CD4-positive, alpha-beta T cell (primary cell): ENCODE measurements at regions of chr9 and their contacts with region 1.

Region 1: DNA sequence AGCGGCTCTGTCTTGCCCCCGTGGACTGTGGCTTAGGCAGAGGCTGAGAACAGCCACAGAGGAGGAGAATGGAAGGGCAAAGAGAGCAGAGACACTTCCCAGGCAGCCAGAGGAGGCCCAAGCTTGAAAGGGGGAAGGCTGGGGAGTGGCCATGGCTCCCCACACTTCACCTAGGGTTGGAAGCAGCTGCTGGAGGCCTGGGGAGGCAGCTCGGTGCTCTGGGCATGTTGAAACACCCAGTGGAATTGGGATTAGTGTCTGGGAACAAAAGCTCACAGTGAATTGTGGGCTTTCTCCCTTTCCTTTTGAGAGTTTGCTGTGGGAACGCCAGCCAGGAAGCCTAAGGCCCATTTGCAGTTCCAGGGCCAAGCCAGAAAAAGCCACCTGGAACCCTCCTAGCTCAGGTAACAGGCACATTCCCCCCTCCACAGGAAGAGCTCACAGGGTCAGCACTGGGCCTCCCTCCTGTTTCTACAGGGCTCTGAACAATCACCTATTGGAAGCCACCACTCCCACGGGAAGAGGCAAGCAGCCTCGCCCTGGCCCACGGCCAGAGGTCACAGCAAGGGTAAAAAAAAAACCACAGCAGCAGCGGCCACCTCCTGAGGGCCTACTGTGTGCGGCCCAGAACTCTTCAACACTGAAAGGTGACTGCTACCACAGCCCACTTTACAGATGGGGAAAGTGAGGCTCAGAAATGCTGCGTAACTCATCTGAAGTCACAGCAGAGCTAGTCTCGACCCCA is 20.2 kb downstream of the EEIG1 start:
- DNase-seq: no peak
- ATAC-seq: no peak
- H3K4me3 ChIP-seq: no peak overlapping the region
- H3K4me3 Mint-ChIP-seq: peak overlapping the region; percentile 79
- H3K27ac ChIP-seq: peak overlapping the region; percentile 54 to 58
- H3K27ac Mint-ChIP-seq: peak overlapping the region; percentile 97
- H3K4me1 ChIP-seq: peaks cover 85% of the 10 kb centered on the region
- H3K4me1 Mint-ChIP-seq: peaks cover 96% of the 10 kb centered on the region
- H3K27me3 ChIP-seq: no peaks in the 10 kb centered on the region
- H3K27me3 Mint-ChIP-seq: no peaks in the 10 kb centered on the region
- CTCF ChIP-seq: no peak

Region 2: GRCh38 chr9:127949827-127950512 is 10.6 kb before region 1 on chr9:
- CTCF ChIA-PET with region 1: interaction called, 74 read pairs
- POLR2A ChIA-PET with region 1: interaction called, 11 read pairs
- intact Hi-C with region 1: no loop called
- DNase-seq: peak in 2 of 14 experiments; percentile 34 to 45
- ATAC-seq: peak; percentile 19
- H3K4me3 ChIP-seq: no peak overlapping the region
- H3K4me3 Mint-ChIP-seq: peak overlapping the region; percentile 72
- H3K27ac ChIP-seq: peak overlapping the region; percentile 49 to 64
- H3K27ac Mint-ChIP-seq: peak overlapping the region; percentile 97
- H3K4me1 ChIP-seq: peaks cover 92% of the 10 kb centered on the region
- H3K4me1 Mint-ChIP-seq: peaks cover 76% of the 10 kb centered on the region
- H3K27me3 ChIP-seq: no peaks in the 10 kb centered on the region
- H3K27me3 Mint-ChIP-seq: no peaks in the 10 kb centered on the region
- CTCF ChIP-seq: no peak